ENCODE measurements at regions of chr13 and their contacts with region 1.

Region 1: GRCh38 chr13:79448413-79448812 is 32.5 kb upstream of the NDFIP2 start:
- DNase-seq: no peak
- H3K4me3 ChIP-seq: no peak overlapping the region
- H3K27ac ChIP-seq: no peak overlapping the region
- H3K27me3 ChIP-seq: no peaks in the 10 kb centered on the region
- CTCF ChIP-seq: no peak

Region 2: GRCh38 chr13:79541426-79542049 is 93.1 kb after region 1 on chr13:
- in situ Hi-C with region 1: loop called (anchors 25 kb)
- DNase-seq: peak; percentile 35
- H3K4me3 ChIP-seq: no peak overlapping the region
- H3K27ac ChIP-seq: no peak overlapping the region
- H3K27me3 ChIP-seq: no peaks in the 10 kb centered on the region
- CTCF ChIP-seq: peak; percentile 34